ENCODE measurements at regions of chr12 and their contacts with region 1.

Region 1: DNA sequence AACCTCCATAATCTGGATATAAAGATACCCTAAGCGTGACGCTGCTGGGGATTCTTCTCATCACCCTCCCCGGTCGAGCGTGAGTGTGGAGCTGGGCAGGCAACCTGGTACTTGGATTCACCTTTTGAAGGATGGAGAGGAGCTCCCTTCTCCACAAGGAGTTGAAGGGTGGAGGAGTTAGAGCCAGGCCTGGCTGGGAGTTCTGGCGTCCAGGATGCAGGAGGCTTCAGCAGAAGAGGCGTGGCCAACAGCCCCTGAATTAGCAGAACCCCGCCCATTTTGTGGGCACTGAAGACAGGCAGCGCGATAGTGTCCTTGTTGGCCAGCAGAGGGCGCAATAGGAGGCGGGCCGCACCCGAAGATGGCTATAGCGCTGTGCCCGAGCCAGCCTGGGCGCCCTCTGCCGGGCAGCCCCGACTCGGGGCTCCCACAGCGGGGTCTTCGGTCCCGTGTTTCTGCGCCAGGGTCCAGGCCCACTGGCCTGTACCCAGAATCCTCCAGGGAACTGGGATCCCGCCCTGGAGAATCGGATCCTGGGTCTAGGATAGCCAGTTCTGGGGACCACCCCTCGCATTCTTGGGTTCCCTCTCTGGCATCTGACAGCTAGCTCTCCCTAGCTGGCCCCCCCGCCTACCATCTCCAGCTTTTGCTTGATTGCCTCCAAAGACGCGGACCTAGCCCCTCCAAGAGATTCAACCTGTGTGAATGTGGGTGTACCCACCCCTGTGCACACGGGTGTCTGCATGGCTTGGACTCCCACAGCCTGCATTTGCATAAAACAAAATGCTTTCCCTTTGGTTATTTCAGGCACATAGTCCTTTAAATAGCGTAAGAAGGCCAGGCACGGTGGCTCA is 26.0 kb upstream of the SMUG1 start:
- DNase-seq: peak; percentile 59
- ATAC-seq: peak; percentile 87
- H3K4me3 ChIP-seq: peak overlapping the region; percentile 46; the same call in 1 of the 2 replicates
- H3K27ac ChIP-seq: peak overlapping the region; percentile 39
- H3K4me1 ChIP-seq: peaks cover 33% of the 10 kb centered on the region
- H3K27me3 ChIP-seq: peaks cover 0 to 1% of the 10 kb centered on the region in 2 experiments; a peak in 1 of 4 replicates
- CTCF ChIP-seq: peak; percentile 99 to 100 (median 99); a peak in 5 of 6 replicates
- EP300 ChIP-seq: no peak
- POLR2A ChIP-seq: no peak
- RAD21 ChIP-seq: peak; percentile 50; the same call in 1 of the 2 replicates

Region 2: DNA sequence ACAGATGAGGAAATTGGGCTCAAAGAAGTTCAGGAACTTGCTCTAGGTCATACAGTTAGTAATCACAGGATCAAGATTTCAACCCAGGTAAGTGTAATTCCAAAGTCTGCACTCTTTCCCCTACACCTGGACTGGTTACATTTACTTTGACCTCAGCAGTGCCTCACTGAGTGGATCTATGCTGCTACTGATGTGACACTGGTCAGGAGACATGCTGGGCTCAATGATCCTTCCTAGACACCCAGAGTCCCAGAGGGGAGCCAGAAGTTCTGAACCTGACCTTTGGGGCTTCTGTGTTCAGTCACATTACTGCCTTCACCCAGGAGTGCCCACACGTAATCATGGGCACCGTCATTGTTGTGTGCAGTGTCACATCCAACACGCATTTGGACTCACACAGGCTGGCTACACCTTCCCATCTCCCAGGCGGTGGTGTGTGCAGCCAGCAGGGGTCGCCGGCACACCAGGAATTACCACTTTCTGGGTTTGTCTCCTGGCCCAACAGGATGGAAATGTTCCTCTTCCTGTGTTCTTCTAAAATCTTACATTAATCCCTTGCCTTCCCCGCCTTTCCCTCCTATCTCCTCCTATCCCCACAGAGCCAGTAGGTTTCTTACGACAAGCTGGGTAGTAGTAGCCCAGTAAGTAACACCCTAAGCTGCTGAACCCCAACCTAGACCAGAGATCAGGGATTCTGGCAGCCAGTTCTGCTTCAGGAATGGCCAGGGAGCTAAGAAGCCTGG is 513.1 kb before region 1 on chr12:
- CTCF ChIA-PET with region 1: no interaction called
- POLR2A ChIA-PET with region 1: no interaction called
- RAD21 ChIA-PET with region 1: interaction called, 3 read pairs
- SMC1A ChIA-PET with region 1: no interaction called
- in situ Hi-C with region 1: no loop called
- intact Hi-C with region 1: loop called (anchors 10 kb)
- DNase-seq: peak; percentile 20
- ATAC-seq: peak; percentile 99
- H3K4me3 ChIP-seq: no peak overlapping the region
- H3K27ac ChIP-seq: no peak overlapping the region
- H3K4me1 ChIP-seq: no peaks in the 10 kb centered on the region
- H3K27me3 ChIP-seq: peaks cover 8 to 29% of the 10 kb centered on the region in 2 experiments
- CTCF ChIP-seq: peak; percentile 96 to 99 (median 98); a peak in 5 of 6 replicates
- EP300 ChIP-seq: no peak
- POLR2A ChIP-seq: no peak
- RAD21 ChIP-seq: peak; percentile 92

Region 3: DNA sequence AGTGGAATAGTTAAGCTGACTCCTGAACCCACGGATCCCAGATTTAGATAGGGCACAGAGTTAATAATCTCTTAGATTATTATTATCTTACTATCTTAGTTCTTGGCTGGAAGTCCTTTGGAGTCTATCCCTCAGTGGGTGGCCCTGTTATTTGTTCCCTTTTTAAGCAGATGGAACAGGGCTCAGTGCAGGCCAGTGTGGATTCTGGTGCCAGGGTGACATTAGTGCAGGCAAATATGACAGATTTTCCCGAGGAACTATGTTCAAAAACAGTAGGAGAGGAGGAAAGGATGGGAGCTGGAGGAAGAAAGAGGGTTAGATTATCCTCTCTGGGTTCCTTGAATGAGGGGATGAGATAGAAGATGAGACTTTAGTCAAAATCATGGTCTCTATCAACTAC is 421.6 kb before region 1 on chr12:
- CTCF ChIA-PET with region 1: no interaction called
- POLR2A ChIA-PET with region 1: no interaction called
- RAD21 ChIA-PET with region 1: no interaction called
- SMC1A ChIA-PET with region 1: no interaction called
- in situ Hi-C with region 1: no loop called
- intact Hi-C with region 1: no loop called
- DNase-seq: no peak
- ATAC-seq: no peak
- H3K4me3 ChIP-seq: no peak overlapping the region
- H3K27ac ChIP-seq: no peak overlapping the region
- H3K4me1 ChIP-seq: no peaks in the 10 kb centered on the region
- H3K27me3 ChIP-seq: no peaks in the 10 kb centered on the region
- CTCF ChIP-seq: no peak
- EP300 ChIP-seq: no peak
- POLR2A ChIP-seq: no peak
- RAD21 ChIP-seq: no peak

Region 4: GRCh38 chr12:54017878-54018467 is 196.8 kb before region 1 on chr12:
- CTCF ChIA-PET with region 1: interaction called, 139 read pairs
- POLR2A ChIA-PET with region 1: no interaction called
- RAD21 ChIA-PET with region 1: interaction called, 5 read pairs
- SMC1A ChIA-PET with region 1: interaction called, 7 read pairs
- in situ Hi-C with region 1: no loop called
- intact Hi-C with region 1: no loop called
- DNase-seq: peak; percentile 79
- ATAC-seq: peak; percentile 92
- H3K4me3 ChIP-seq: peak overlapping the region; percentile 88
- H3K27ac ChIP-seq: peak overlapping the region; percentile 80
- H3K4me1 ChIP-seq: peaks cover 21% of the 10 kb centered on the region
- H3K27me3 ChIP-seq: peaks cover 8 to 26% of the 10 kb centered on the region in 2 experiments
- CTCF ChIP-seq: no peak
- EP300 ChIP-seq: peak; percentile 36 to 45; a peak in 1 of 4 replicates
- POLR2A ChIP-seq: peak; percentile 79
- RAD21 ChIP-seq: no peak

Region 5: DNA sequence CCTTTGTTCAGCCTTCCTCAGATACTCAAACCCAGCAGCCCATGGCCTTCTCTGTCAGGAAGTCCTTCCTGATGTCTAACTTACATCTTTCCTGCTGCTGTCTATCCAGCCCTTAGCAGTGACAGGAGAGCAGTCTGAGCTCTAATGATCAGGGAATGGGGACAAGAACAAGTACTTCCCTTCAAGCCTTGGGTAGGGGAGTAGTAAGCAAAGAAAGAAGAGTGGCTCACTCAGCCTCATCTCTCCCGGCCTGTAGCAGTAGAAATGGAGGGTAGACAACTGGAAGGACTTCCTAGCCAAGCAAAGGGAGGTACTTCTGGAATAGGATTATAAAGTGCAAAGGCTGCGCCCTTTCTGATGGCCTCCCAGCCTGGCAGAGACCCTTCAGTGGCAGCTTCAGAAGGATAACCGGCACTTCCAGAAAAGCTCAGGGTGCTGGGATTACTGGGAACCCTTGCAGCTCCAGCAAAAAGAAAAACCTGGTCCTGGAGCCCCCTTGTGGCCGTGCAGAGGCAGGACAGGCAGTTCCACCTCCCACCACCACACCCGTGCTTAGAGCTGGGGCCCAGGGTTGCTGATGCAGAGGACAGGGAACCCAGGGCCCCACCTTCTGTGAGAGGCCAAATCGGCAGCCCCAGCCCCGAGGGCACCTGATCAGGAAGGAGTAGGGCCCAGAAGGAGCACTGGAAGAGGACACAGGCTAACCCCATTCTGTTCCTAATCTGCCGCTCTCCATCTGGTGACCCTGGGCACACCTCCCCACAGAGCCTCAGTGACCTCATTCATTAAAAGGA is 13.6 kb before region 1 on chr12:
- CTCF ChIA-PET with region 1: interaction called, 61 read pairs
- POLR2A ChIA-PET with region 1: no interaction called
- RAD21 ChIA-PET with region 1: interaction called, 6 read pairs
- SMC1A ChIA-PET with region 1: interaction called, 6 read pairs
- in situ Hi-C with region 1: no loop called
- intact Hi-C with region 1: no loop called
- DNase-seq: no peak
- ATAC-seq: peak; percentile 97
- H3K4me3 ChIP-seq: no peak overlapping the region
- H3K27ac ChIP-seq: no peak overlapping the region
- H3K4me1 ChIP-seq: peaks cover 15% of the 10 kb centered on the region
- H3K27me3 ChIP-seq: peaks cover 0 to 2% of the 10 kb centered on the region in 2 experiments; a peak in 3 of 4 replicates
- CTCF ChIP-seq: peak; percentile 93 to 98 (median 96)
- EP300 ChIP-seq: no peak
- POLR2A ChIP-seq: no peak
- RAD21 ChIP-seq: peak; percentile 68

Region 6: GRCh38 chr12:54251667-54252284 is 37.0 kb after region 1 on chr12:
- CTCF ChIA-PET with region 1: interaction called, 26 read pairs
- POLR2A ChIA-PET with region 1: no interaction called
- RAD21 ChIA-PET with region 1: no interaction called
- SMC1A ChIA-PET with region 1: interaction called, 10 read pairs
- in situ Hi-C with region 1: no loop called
- intact Hi-C with region 1: no loop called
- DNase-seq: no peak
- ATAC-seq: peak; percentile 91
- H3K4me3 ChIP-seq: no peak overlapping the region
- H3K27ac ChIP-seq: no peak overlapping the region
- H3K4me1 ChIP-seq: no peaks in the 10 kb centered on the region
- H3K27me3 ChIP-seq: no peaks in the 10 kb centered on the region
- CTCF ChIP-seq: peak; percentile 53 to 67 (median 64); a peak in 5 of 6 replicates
- EP300 ChIP-seq: no peak
- POLR2A ChIP-seq: no peak
- RAD21 ChIP-seq: peak; percentile 63

Region 7: GRCh38 chr12:54324617-54325441 is 110.0 kb after region 1 on chr12 and contains the start of gene COPZ1:
- CTCF ChIA-PET with region 1: interaction called, 33 read pairs
- POLR2A ChIA-PET with region 1: interaction called, 5 read pairs
- RAD21 ChIA-PET with region 1: interaction called, 12 read pairs
- SMC1A ChIA-PET with region 1: interaction called, 5 read pairs
- in situ Hi-C with region 1: no loop called
- intact Hi-C with region 1: no loop called
- DNase-seq: peak; percentile 99
- ATAC-seq: peak; percentile 99
- H3K4me3 ChIP-seq: peak within 1 kb of the TSS; percentile 98
- H3K27ac ChIP-seq: peak within 1 kb of the TSS; percentile 84
- H3K4me1 ChIP-seq: no peaks in the 10 kb centered on the region; the same call in 1 of the 2 replicates
- H3K27me3 ChIP-seq: no peaks in the 10 kb centered on the region
- CTCF ChIP-seq: peak; percentile 73 to 88 (median 77)
- EP300 ChIP-seq: no peak
- POLR2A ChIP-seq: peak; percentile 91
- RAD21 ChIP-seq: peak; percentile 52; the same call in 1 of the 2 replicates
- polyA plus RNA-seq, gene COPZ1: 260 to 378 TPM

Region 8: GRCh38 chr12:54368709-54369583 is 154.2 kb after region 1 on chr12:
- CTCF ChIA-PET with region 1: interaction called, 83 read pairs
- POLR2A ChIA-PET with region 1: no interaction called
- RAD21 ChIA-PET with region 1: interaction called, 18 read pairs
- SMC1A ChIA-PET with region 1: interaction called, 9 read pairs
- in situ Hi-C with region 1: loop called (anchors 5 kb)
- intact Hi-C with region 1: no loop called
- DNase-seq: no peak
- ATAC-seq: peak; percentile 92
- H3K4me3 ChIP-seq: no peak overlapping the region
- H3K27ac ChIP-seq: no peak overlapping the region
- H3K4me1 ChIP-seq: peaks cover 24% of the 10 kb centered on the region
- H3K27me3 ChIP-seq: no peaks in the 10 kb centered on the region
- CTCF ChIP-seq: peak; percentile 91 to 99 (median 98); a peak in 5 of 6 replicates
- EP300 ChIP-seq: no peak
- POLR2A ChIP-seq: no peak
- RAD21 ChIP-seq: peak; percentile 93

Measured in GM12878 (cell line).